H1 (cell line): ENCODE measurements at regions of chr20 and their contacts with region 1.

Region 1: GRCh38 chr20:33791959-33792597 is 19.1 kb upstream of the CHMP4B start:
- DNase-seq: peak; percentile 31 to 91
- H3K4me3 ChIP-seq: no peak overlapping the region
- H3K27ac ChIP-seq: no peak overlapping the region
- H3K4me1 ChIP-seq: peaks cover 0 to 7% (median 2%) of the 10 kb centered on the region in 4 experiments; a peak in 3 of 7 replicates
- H3K27me3 ChIP-seq: no peaks in the 10 kb centered on the region
- CTCF ChIP-seq: peak; percentile 84 to 92 (median 88)
- EP300 ChIP-seq: no peak
- POLR2A ChIP-seq: no peak
- RAD21 ChIP-seq: peak; percentile 86 to 88

Region 2: DNA sequence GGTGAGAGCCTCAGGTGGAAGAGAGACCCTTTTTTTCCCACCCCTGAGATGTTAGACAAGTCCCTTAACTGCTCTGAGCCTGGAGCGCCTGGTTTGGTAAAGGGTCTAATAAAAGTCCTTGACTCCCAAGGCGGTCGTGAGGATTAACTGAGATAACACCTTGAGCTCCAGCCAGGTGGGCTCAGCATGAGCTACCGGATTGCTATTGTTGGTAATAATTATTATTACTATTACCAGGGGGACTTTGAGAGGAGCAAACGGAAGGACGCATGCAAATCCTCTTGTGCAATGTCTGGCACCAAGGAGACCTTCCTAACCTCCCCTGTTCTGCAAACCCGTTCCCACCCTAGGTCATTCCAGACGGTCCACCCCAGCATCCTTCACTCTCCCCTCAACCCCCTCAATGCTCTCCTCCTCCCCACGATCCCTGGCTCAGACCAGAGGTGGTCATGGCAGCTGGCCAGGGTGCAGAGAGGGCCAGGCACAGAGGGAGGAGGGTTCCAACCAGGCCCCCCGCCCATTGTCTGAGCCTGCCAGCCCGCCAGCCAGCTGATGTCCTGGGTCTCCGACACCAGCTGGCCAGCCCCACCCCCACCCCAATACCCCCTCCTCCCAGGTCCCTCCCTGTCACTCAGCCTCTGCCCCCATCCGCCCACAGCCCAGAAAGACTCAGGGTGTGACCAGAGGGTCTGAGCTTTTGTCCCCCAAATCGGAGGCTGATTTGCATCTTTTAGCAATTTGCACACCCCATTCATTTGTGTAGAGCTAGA is 316.5 kb before region 1 on chr20:
- CTCF ChIA-PET with region 1: no interaction called
- POLR2A ChIA-PET with region 1: no interaction called
- DNase-seq: no peak
- H3K4me3 ChIP-seq: no peak overlapping the region
- H3K27ac ChIP-seq: no peak overlapping the region
- H3K4me1 ChIP-seq: peaks cover 3 to 18% (median 10%) of the 10 kb centered on the region in 4 experiments
- H3K27me3 ChIP-seq: no peaks in the 10 kb centered on the region
- CTCF ChIP-seq: no peak
- EP300 ChIP-seq: no peak
- POLR2A ChIP-seq: no peak
- RAD21 ChIP-seq: no peak

Region 3: DNA sequence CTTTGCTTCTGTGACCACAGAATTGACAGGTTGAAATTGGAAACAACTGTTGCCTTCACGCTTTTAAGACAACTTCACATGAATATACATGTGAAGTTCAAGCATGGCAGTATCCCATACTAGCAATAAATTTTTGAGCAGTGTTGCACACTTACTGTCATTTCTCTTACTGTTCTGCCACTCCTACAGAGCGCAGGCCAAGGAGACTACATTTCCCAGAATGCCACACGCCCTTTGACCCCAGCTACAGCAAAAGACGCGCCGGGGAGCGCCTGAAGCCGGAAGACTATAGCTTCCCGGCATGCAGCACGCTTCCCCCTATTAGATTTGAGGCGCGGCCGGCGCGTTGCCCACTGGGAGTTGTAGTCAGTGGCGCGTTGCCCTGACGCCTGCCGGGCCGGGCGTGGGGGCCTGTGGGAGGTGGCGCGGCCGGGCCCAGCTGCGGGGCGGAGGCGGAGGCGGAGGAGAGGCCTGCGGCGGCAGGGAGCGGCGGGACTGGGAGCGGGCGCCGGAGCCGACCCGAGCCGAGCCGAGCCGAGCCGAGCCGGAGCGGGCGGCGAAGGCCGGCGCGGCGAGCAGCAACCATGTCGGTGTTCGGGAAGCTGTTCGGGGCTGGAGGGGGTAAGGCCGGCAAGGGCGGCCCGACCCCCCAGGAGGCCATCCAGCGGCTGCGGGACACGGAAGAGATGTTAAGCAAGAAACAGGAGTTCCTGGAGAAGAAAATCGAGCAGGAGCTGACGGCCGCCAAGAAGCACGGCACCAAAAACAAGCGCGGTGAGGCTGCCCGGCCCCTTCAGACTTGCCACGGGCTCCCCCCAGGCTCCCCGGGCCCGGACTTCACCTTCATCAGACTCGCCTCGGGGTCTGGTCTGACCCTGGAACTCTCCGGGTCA is 19.1 kb after region 1 on chr20 and contains the start of gene CHMP4B:
- CTCF ChIA-PET with region 1: interaction called, 17 read pairs
- POLR2A ChIA-PET with region 1: no interaction called
- DNase-seq: peak; percentile 85 to 95
- H3K4me3 ChIP-seq: peak within 1 kb of the TSS; percentile 77 to 96 (median 94)
- H3K27ac ChIP-seq: peak within 1 kb of the TSS; percentile 70
- H3K4me1 ChIP-seq: peaks cover 3 to 8% (median 6%) of the 10 kb centered on the region in 4 experiments; a peak in 6 of 7 replicates
- H3K27me3 ChIP-seq: no peaks in the 10 kb centered on the region
- CTCF ChIP-seq: no peak
- EP300 ChIP-seq: no peak
- POLR2A ChIP-seq: peak in 1 of 2 experiments; percentile 64; a peak in 2 of 3 replicates
- RAD21 ChIP-seq: no peak
- total RNA-seq, gene CHMP4B: 66.3 and 67.8 TPM in 2 replicates

Region 4: GRCh38 chr20:33826270-33826897 is 34.3 kb after region 1 on chr20:
- CTCF ChIA-PET with region 1: interaction called, 19 read pairs
- POLR2A ChIA-PET with region 1: no interaction called
- DNase-seq: no peak
- H3K4me3 ChIP-seq: no peak overlapping the region
- H3K27ac ChIP-seq: 0 out of 2 replicates have a peak overlapping the region, but pooled peaks have one; percentile 43
- H3K4me1 ChIP-seq: peaks cover 0 to 10% (median 2%) of the 10 kb centered on the region in 4 experiments; a peak in 2 of 7 replicates
- H3K27me3 ChIP-seq: no peaks in the 10 kb centered on the region
- CTCF ChIP-seq: no peak
- EP300 ChIP-seq: no peak
- POLR2A ChIP-seq: no peak
- RAD21 ChIP-seq: no peak

Region 5: DNA sequence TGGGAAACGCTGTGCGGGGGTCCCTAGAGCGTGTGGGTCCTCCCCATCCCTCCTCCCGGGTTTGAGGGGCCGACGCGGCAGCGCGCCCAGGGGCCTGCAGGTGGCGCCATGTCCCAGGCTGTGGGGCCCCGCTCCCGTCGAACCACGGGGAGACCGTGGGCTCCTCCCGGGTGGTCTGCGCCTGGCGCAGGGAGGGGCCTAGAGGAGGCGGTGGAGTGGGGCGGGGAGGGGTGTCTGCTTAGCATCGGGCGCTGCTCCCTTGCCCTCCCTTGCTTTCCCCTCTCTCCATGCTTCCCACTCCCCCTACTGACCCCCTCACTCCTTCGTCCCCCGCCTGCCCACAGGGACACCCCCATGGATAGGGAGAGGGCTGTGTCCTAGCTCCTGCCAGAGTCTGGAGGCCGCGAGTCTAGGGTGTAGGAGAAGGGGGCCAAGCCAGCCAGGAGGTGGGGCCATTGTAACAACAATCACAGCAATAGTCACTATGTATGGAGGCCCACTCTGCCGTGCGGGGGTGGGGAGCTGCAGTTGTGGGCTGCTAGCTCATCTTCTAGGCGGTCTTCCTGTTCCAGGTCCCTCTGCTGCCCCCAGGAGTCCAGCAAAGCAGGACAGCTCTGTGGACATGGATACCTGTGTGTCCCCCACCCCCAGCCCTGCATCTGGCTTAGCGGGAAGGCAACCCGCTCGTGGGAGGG is 70.8 kb after region 1 on chr20:
- CTCF ChIA-PET with region 1: interaction called, 51 read pairs
- POLR2A ChIA-PET with region 1: no interaction called
- DNase-seq: peak; percentile 46 to 93
- H3K4me3 ChIP-seq: peak overlapping the region in 1 of 4 experiments; percentile 52; a peak in 4 of 8 replicates
- H3K27ac ChIP-seq: no peak overlapping the region
- H3K4me1 ChIP-seq: peaks cover 0 to 5% (median 4%) of the 10 kb centered on the region in 4 experiments; a peak in 4 of 7 replicates
- H3K27me3 ChIP-seq: no peaks in the 10 kb centered on the region
- CTCF ChIP-seq: peak; percentile 84 to 89 (median 88)
- EP300 ChIP-seq: no peak
- POLR2A ChIP-seq: no peak
- RAD21 ChIP-seq: peak; percentile 89 to 90

Region 6: DNA sequence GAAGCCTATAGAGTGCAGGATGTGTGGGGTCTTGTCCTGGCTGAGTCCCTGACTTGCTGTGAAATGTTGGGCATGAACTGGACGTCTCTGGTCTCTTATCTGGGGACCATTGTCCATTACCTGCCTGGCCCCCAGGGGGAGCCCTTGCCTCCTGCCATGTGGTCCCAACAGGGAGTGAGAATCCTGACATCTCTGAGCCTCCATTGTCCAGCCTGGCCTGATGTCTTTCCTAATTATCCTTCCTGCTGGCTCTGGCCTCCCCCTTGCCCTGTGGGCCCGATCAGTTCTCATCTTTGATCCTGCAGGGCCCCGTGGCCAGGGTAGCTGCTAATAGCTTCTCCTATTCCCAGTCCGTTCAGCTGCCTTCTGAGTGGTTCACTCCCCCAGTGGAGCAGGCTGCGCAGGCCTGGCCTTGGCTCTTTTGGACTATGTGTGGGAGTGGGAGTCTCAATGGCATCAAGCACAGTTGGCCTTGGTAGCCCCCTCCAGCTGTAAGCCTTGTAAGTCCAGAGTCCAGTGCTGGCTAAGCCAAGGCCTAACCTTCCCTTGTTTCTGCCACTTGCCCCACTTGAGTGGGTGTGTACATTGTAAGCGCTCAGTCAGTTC is 123.8 kb after region 1 on chr20:
- CTCF ChIA-PET with region 1: interaction called, 13 read pairs
- POLR2A ChIA-PET with region 1: no interaction called
- DNase-seq: peak in 1 of 2 experiments; percentile 85
- H3K4me3 ChIP-seq: no peak overlapping the region
- H3K27ac ChIP-seq: no peak overlapping the region
- H3K4me1 ChIP-seq: no peaks in the 10 kb centered on the region
- H3K27me3 ChIP-seq: no peaks in the 10 kb centered on the region
- CTCF ChIP-seq: peak; percentile 76 to 92 (median 85)
- EP300 ChIP-seq: no peak
- POLR2A ChIP-seq: no peak
- RAD21 ChIP-seq: peak; percentile 50 to 66